A673 (cell line): ENCODE measurements at regions of chr14 and their contacts with region 1.

Region 1: DNA sequence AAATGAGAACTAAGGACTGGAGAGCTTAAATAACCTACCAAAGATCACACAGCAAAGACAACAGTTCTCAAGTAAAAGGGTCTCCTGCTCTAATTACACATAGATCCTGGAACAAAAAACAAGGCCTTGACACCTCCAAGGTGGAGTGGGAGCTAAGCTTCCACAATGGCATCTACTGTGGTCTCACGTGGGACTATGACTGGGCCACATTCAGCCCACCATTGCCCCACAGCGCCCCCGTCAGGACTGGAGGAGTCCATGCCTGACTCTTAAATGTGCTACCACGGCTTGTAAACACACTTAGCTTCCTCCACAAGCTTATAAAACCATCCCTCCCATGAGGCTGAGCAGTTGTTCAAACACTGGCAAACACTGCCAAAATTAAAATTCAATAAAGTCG is 88.5 kb downstream of the GCH1 start:
- DNase-seq: peak; percentile 52
- H3K4me3 ChIP-seq: no peak overlapping the region
- H3K27ac ChIP-seq: no peak overlapping the region
- H3K4me1 ChIP-seq: peaks cover 8% of the 10 kb centered on the region
- H3K27me3 ChIP-seq: no peaks in the 10 kb centered on the region
- CTCF ChIP-seq: peak; percentile 51

Region 2: DNA sequence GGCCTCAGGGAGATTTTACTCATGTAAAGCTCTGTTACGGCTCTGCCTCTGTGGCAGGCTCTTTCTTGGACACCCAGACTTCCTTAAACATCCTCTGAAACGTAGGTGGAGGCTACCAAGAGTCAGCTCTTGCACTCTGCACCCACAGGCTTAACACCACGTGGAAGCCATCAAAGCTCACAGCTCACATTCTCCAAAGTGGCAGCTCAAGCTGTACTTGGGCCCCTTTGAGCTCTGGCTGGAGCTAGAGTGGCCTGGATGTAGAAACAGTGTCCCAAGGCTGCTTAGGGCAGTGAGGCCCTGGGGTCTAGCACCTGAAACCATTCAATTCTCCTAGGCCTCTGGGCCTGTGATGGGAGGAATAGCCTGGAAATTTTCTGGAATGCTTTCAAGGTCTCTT is 572.6 kb before region 1 on chr14:
- CTCF ChIA-PET with region 1: no interaction called
- POLR2A ChIA-PET with region 1: no interaction called
- intact Hi-C with region 1: no loop called
- DNase-seq: no peak
- H3K4me3 ChIP-seq: no peak overlapping the region
- H3K27ac ChIP-seq: no peak overlapping the region
- H3K4me1 ChIP-seq: no peaks in the 10 kb centered on the region
- H3K27me3 ChIP-seq: peaks cover 6% of the 10 kb centered on the region
- CTCF ChIP-seq: no peak

Region 3: DNA sequence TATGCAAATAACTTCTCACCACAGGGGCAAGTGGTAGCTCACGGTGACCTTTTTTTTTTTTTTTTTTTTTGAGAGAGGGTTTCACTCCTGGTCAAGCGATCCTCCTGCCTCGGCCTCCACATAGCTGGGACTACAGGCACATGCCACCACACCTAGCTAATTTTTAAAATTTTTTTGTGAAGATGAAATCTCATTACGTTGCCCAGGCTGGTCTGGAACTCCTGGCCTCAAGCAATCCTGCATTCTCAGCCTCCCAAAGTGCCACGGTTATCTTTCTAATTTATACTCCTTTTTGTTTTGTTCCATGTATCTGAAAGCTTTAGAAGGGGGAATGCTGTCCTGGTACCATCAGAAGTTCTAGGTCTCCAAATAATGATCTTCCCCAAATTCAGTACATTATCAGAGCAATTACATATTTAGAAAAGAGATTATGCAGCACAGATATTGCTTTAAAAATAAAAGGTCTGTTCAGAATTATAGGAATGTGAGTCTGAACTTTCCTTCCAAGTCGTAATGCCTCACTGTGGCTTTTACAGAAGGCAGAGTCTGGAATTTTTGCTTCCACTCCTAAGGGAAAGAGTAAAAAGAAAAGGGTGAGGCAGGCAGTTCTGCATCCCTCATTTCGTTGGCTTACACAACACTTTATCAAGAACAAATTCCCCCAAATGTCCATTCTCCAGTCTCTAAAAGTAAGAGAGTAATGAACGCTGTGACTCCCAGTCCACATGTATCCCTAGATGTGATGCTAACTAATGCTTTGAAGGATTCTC is 15.6 kb after region 1 on chr14:
- CTCF ChIA-PET with region 1: no interaction called
- POLR2A ChIA-PET with region 1: interaction called, 18 read pairs
- intact Hi-C with region 1: no loop called
- DNase-seq: no peak
- H3K4me3 ChIP-seq: no peak overlapping the region
- H3K27ac ChIP-seq: no peak overlapping the region
- H3K4me1 ChIP-seq: no peaks in the 10 kb centered on the region
- H3K27me3 ChIP-seq: no peaks in the 10 kb centered on the region
- CTCF ChIP-seq: no peak

Region 4: DNA sequence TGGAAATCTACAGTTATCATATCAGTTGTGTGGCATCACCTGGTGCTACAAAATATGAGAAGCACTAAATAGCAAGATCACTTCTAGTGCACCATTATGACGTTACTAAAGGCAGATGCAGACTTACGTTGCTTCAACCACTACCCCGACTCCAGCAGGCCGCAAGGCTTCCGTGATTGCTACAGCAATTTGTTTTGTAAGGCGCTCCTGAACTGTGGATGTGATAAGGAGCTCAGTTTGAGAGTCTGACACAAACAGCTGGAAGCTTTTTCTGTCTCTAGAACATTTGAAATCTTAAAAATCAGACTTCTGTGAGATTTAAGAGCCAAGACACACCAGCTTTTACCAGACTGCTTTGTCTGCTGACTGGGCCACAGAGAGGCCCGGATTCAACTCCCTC is 31.6 kb after region 1 on chr14:
- CTCF ChIA-PET with region 1: no interaction called
- POLR2A ChIA-PET with region 1: no interaction called
- intact Hi-C with region 1: no loop called
- DNase-seq: no peak
- H3K4me3 ChIP-seq: no peak overlapping the region
- H3K27ac ChIP-seq: no peak overlapping the region
- H3K4me1 ChIP-seq: no peaks in the 10 kb centered on the region
- H3K27me3 ChIP-seq: no peaks in the 10 kb centered on the region
- CTCF ChIP-seq: no peak